ENCODE measurements at regions of chr3 and their contacts with region 1.

Region 1: GRCh38 chr3:71456156-71456555 is 127.4 kb downstream of the FOXP1 start:
- DNase-seq: peak in 4 of 10 donors; percentile 26 to 57 (median 54)
- ATAC-seq: peak; percentile 18 to 32
- H3K4me3 Mint-ChIP-seq: peak overlapping the region; percentile 60 to 88 (median 80)
- H3K27ac Mint-ChIP-seq: peak overlapping the region; percentile 89 to 99 (median 98)
- H3K4me1 Mint-ChIP-seq: peaks cover 50 to 97% (median 87%) of the 10 kb centered on the region in 4 donors
- H3K27me3 Mint-ChIP-seq: no peaks in the 10 kb centered on the region

Region 2: GRCh38 chr3:70916375-70917065 is 539.6 kb before region 1 on chr3:
- POLR2A ChIA-PET with region 1: no interaction called
- DNase-seq: no peak
- ATAC-seq: no peak
- H3K4me3 Mint-ChIP-seq: no peak overlapping the region
- H3K27ac Mint-ChIP-seq: no peak overlapping the region
- H3K4me1 Mint-ChIP-seq: no peaks in the 10 kb centered on the region
- H3K27me3 Mint-ChIP-seq: peaks cover 0 to 14% (median 4%) of the 10 kb centered on the region in 5 donors

Region 3: GRCh38 chr3:71423151-71423906 is 32.8 kb before region 1 on chr3:
- POLR2A ChIA-PET with region 1: interaction called, 16 read pairs
- DNase-seq: no peak
- ATAC-seq: no peak
- H3K4me3 Mint-ChIP-seq: peak overlapping the region; percentile 62 to 81 (median 74)
- H3K27ac Mint-ChIP-seq: peak overlapping the region; percentile 93 to 99 (median 98)
- H3K4me1 Mint-ChIP-seq: peaks cover 52 to 95% (median 88%) of the 10 kb centered on the region in 4 donors
- H3K27me3 Mint-ChIP-seq: no peaks in the 10 kb centered on the region

Region 4: GRCh38 chr3:71444028-71444860 is 11.9 kb before region 1 on chr3:
- POLR2A ChIA-PET with region 1: interaction called, 164 read pairs
- DNase-seq: peak; percentile 44 to 96 (median 84)
- ATAC-seq: peak; percentile 69 to 84
- H3K4me3 Mint-ChIP-seq: peak overlapping the region; percentile 59 to 87 (median 84)
- H3K27ac Mint-ChIP-seq: peak overlapping the region; percentile 95 to 100 (median 99)
- H3K4me1 Mint-ChIP-seq: peaks cover 48 to 97% (median 97%) of the 10 kb centered on the region in 4 donors
- H3K27me3 Mint-ChIP-seq: no peaks in the 10 kb centered on the region

Region 5: DNA sequence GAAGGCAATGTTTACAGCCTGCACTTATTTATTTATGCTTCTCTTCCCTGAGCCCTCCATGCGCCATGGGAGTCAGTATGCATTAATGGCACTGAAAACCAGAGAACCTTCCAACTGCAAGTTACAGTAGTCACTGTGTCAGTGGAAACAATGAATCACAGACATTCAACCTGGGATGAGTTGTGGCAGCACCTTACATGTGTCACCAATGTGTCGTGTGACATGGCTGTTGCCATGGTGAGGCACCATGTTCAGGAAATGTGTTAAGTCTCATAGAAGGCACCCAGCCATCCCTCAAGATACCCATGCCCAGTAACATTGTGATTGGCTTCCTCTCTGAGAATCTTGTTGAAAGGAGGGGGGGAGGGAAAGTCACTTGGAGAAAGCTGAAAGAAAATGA is 22.4 kb after region 1 on chr3:
- POLR2A ChIA-PET with region 1: interaction called, 20 read pairs
- DNase-seq: peak in 9 of 10 donors; percentile 22 to 91 (median 62)
- ATAC-seq: peak; percentile 87 to 89
- H3K4me3 Mint-ChIP-seq: peak overlapping the region; percentile 9 to 85 (median 66)
- H3K27ac Mint-ChIP-seq: peak overlapping the region; percentile 89 to 98 (median 96)
- H3K4me1 Mint-ChIP-seq: peaks cover 38 to 93% (median 87%) of the 10 kb centered on the region in 4 donors
- H3K27me3 Mint-ChIP-seq: no peaks in the 10 kb centered on the region

Region 6: GRCh38 chr3:71495708-71496472 is 39.7 kb after region 1 on chr3:
- POLR2A ChIA-PET with region 1: interaction called, 126 read pairs
- DNase-seq: peak in 2 of 10 donors; percentile 23 to 41
- ATAC-seq: peak in 1 of 2 donors; percentile 19
- H3K4me3 Mint-ChIP-seq: peak overlapping the region; percentile 58 to 87 (median 82)
- H3K27ac Mint-ChIP-seq: peak overlapping the region; percentile 96 to 100 (median 98)
- H3K4me1 Mint-ChIP-seq: peaks cover 46 to 94% (median 88%) of the 10 kb centered on the region in 4 donors
- H3K27me3 Mint-ChIP-seq: no peaks in the 10 kb centered on the region

Region 7: DNA sequence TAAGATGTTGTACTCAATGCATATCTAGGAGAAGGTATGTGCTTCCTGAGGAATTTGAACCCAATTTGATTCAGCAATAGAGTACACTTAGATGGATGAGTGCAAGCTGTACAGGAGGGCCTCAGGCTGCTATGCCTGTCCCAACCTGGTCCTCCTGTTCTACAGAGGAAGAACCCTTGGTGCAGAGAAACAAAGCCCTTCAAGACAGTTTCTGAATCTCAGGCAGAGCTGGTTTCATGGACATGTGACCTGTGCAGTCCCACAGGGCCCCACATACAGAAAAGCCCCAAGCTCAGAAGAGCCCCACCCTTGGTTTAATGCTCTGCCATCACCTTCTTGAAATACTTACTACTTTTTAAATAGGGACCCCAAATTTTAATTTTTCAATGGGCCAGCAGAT is 112.1 kb after region 1 on chr3:
- POLR2A ChIA-PET with region 1: no interaction called
- DNase-seq: no peak
- ATAC-seq: no peak
- H3K4me3 Mint-ChIP-seq: no peak overlapping the region
- H3K27ac Mint-ChIP-seq: peak overlapping the region in 2 of 10 donors; percentile 34 to 68
- H3K4me1 Mint-ChIP-seq: peaks cover 6 to 51% (median 15%) of the 10 kb centered on the region in 4 donors
- H3K27me3 Mint-ChIP-seq: no peaks in the 10 kb centered on the region

Region 8: DNA sequence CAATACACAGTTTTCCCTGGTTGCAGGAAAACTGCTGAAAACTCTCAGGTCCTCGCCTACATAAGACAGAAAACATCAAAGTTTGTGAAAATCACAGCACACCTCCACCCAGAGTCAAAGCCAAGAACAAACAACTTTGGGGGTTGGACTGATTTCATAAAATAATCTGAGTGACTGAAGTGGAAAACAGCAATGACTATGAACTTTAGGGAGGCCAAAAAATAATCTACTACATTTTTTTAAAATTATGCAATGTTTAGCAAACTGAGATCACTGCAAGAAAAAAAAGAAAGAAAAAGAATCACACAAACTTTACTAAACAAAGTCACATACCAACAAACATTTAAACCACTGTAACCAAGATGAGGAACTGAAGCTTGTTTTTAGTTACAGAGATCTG is 143.3 kb after region 1 on chr3:
- POLR2A ChIA-PET with region 1: no interaction called
- DNase-seq: no peak
- ATAC-seq: no peak
- H3K4me3 Mint-ChIP-seq: no peak overlapping the region
- H3K27ac Mint-ChIP-seq: peak overlapping the region in 1 of 10 donors; percentile 24
- H3K4me1 Mint-ChIP-seq: peaks cover 4 to 6% (median 5%) of the 10 kb centered on the region in 4 donors
- H3K27me3 Mint-ChIP-seq: peaks cover 0 to 4% (median 0%) of the 10 kb centered on the region in 5 donors

Region 9: DNA sequence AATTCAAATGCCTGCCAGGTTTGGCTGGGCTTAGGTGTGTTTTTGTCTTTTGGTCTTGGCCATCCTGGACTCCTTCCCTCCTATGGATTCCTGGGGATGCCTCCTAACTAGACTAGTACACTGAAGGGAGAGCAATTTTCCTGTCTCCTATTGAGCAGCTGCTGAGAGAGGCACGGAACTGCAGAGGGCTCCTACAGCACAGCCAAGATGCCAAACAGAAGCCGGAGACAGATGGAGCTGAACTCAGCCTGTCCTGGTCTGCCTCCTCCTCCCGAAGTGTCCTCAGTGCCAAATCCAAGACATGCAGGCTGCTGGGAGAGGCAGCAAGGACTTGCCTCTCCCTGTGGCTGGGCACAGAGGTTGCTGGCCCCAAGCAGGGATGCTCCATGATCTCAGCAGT is 585.4 kb after region 1 on chr3:
- POLR2A ChIA-PET with region 1: no interaction called
- DNase-seq: no peak
- ATAC-seq: no peak
- H3K4me3 Mint-ChIP-seq: no peak overlapping the region
- H3K27ac Mint-ChIP-seq: no peak overlapping the region
- H3K4me1 Mint-ChIP-seq: peaks cover 0 to 8% (median 0%) of the 10 kb centered on the region in 4 donors
- H3K27me3 Mint-ChIP-seq: peaks cover 10 to 44% (median 23%) of the 10 kb centered on the region in 5 donors